Posterior vena cava (tissue), 2 donors: ENCODE measurements at regions of chr1 and their contacts with region 1.

Region 1: GRCh38 chr1:35564037-35564883 is 6.7 kb downstream of the NCDN start:
- DNase-seq: peak; percentile 91

Region 2: GRCh38 chr1:35726450-35727433 is 162.5 kb after region 1 on chr1:
- intact Hi-C with region 1: loop called in 1 of 2 experiments (anchors 5 kb)
- DNase-seq: no peak